ENCODE measurements at regions of chr16 and their contacts with region 1.

Region 1: GRCh38 chr16:22190776-22191531 is 15.1 kb upstream of the EEF2K start:
- DNase-seq: peak; percentile 98
- H3K4me3 ChIP-seq: peak overlapping the region; percentile 63
- H3K27ac ChIP-seq: peak overlapping the region; percentile 85
- H3K4me1 ChIP-seq: peaks cover 15% of the 10 kb centered on the region
- H3K27me3 ChIP-seq: no peaks in the 10 kb centered on the region
- CTCF ChIP-seq: no peak

Region 2: DNA sequence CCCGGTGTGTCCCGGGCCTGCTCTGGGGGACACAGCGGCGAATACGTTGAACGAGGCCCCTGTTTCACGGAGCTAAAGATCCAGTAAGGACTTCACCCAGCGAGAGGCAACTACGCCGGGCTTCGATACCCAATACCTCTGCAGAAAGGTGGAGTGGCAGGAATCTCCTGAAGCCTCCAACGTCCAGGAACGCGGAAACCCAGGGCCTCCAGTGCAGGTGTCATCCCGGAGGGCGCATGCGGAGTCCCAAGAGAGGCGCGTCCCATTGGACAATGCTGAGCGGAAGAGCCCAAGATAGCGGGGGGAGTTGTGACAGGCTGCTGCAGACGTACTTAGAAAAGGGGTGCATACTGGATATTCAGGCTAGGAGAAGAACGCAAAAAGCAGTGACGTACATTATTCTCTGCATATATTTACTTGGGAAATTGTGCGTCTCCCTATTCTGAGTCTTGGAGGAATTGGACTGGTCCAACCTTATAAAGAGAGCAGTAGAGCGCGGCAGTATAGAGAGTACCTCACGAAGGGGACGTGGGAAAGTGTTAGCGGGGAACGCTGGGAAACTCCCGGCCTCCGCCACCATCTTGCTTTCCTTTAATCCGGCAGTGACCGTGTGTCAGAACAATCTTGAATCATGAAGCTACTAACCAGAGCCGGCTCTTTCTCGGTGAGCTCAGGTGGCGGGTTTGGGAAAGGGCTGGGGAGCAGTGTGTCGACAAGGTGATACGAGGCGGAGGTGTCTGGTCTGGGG is 238.0 kb before region 1 on chr16 and contains the start of gene UQCRC2:
- CTCF ChIA-PET with region 1: interaction called, 15 read pairs
- POLR2A ChIA-PET with region 1: no interaction called
- intact Hi-C with region 1: loop called (anchors 2 kb)
- DNase-seq: peak; percentile 95
- H3K4me3 ChIP-seq: peak within 1 kb of the TSS; percentile 74
- H3K27ac ChIP-seq: peak within 1 kb of the TSS; percentile 98
- H3K4me1 ChIP-seq: peaks cover 12% of the 10 kb centered on the region
- H3K27me3 ChIP-seq: no peaks in the 10 kb centered on the region
- CTCF ChIP-seq: no peak
- total RNA-seq, gene UQCRC2: 259 and 311 TPM in 2 replicates

Region 3: DNA sequence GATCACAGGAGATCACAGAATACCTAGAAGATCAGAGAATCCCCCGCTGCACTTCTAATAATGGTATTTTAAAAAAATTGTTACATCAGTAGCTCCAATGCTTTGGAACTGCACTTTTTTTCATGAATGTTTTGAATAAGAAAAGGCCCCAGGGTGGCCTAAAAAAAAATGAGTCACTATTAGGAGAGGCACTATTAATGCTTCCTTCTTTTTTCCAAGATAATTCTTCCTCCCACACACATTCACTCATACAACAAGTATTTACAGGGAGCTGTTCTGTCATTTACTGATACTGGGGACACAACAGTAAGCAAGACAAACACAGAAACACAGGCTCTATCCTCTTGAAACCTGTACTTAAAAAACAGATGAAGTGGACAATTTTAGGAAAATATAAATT is 189.4 kb before region 1 on chr16:
- CTCF ChIA-PET with region 1: interaction called, 21 read pairs
- POLR2A ChIA-PET with region 1: no interaction called
- intact Hi-C with region 1: loop called (anchors 1 kb)
- DNase-seq: peak; percentile 34
- H3K4me3 ChIP-seq: no peak overlapping the region
- H3K27ac ChIP-seq: no peak overlapping the region
- H3K4me1 ChIP-seq: no peaks in the 10 kb centered on the region
- H3K27me3 ChIP-seq: no peaks in the 10 kb centered on the region
- CTCF ChIP-seq: no peak

Region 4: DNA sequence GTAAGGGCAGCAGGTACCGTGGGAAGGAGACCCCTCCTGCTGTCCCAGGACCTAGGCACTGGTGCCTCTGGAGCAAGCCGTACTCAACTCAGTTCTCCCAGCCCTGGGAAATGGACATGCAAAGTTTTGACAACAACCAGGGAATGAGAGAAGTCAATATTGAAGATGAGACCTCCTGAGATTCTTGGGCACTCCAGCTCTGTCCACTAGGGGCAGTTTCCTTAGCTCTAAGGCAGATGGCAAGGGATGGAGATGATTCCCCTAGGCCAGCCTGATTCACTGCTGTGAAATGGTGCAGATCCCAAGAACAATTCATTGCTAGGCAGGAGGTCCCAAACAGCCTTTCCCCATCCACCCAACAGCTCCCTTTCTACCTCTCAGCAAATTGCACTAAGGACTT is 49.2 kb before region 1 on chr16:
- CTCF ChIA-PET with region 1: no interaction called
- POLR2A ChIA-PET with region 1: no interaction called
- intact Hi-C with region 1: no loop called
- DNase-seq: peak; percentile 36
- H3K4me3 ChIP-seq: no peak overlapping the region
- H3K27ac ChIP-seq: no peak overlapping the region
- H3K4me1 ChIP-seq: no peaks in the 10 kb centered on the region
- H3K27me3 ChIP-seq: no peaks in the 10 kb centered on the region
- CTCF ChIP-seq: peak; percentile 56

Region 5: DNA sequence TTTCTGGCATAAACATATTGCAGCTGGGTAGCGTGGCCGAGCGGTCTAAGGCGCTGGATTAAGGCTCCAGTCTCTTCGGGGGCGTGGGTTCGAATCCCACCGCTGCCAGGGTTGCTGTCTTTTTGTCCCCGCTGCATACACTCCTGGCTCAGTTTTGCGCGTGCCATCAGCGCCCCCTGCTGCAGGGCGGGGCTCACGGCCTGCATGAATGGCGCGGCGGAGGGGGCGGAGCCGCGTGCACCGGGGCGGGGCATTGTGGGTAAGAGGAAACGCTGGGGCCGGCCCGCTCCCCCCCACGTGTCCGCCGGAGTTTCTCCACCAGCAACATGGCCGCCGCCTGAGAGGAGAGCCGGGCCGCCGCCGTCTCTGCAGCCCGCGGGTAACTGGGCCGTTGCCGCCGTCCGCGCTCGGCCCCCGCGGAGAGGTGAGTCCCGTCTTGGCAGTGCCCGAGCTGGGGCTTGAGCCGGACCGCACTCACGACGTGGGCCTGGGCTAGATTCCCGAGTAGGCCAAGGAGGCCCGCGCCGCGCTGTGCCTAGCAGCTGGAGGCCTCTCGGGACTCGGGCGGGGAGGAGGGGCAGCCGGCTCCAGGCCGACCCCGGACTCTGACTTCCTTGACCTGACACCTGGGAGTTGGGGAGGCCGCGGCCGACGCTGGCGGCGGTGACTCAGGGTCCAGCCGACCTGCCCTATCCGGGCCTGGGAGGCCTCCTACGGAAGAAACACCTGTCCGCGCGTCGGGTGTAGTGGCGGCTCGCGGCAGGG is 106.3 kb after region 1 on chr16 and contains the start of gene POLR3E:
- CTCF ChIA-PET with region 1: interaction called, 4 read pairs
- POLR2A ChIA-PET with region 1: interaction called, 5 read pairs
- intact Hi-C with region 1: loop called (anchors 1 kb)
- DNase-seq: peak; percentile 99
- H3K4me3 ChIP-seq: peak within 1 kb of the TSS; percentile 88
- H3K27ac ChIP-seq: peak within 1 kb of the TSS; percentile 96
- H3K4me1 ChIP-seq: no peaks in the 10 kb centered on the region
- H3K27me3 ChIP-seq: no peaks in the 10 kb centered on the region
- CTCF ChIP-seq: peak; percentile 95
- total RNA-seq, gene POLR3E: 69.8 and 80.6 TPM in 2 replicates

Region 6: DNA sequence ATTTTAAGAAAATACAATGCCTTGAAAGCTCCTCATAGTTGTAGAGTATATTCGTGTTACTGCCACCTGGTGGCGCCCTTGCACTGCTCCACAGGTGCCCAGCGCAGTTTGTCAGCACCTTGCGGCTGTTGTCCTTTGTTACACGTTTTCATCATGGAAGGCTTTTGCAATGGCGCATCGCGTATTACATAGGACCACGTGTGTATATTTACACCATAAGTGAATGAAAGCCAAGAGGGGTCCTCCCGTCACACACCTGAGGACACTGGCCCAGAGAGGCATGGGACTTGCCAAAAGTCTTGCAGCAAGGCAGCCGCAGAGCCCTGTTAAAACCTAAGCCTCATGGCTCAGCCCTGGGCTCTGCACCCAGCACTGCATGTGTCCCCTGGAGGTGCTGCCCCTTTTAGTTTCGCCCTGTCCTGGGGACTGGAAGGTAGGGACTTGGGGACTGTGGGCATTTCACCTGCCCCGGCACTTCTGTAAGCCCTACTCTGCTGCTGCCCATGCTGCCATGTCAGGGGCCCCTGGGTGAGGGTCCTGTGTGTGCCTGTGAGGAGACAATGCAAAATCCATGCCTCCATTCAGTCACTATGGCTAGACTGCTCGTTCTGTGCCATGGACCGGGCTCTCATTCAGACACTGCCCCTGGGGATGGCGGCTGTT is 130.5 kb after region 1 on chr16:
- CTCF ChIA-PET with region 1: interaction called, 17 read pairs
- POLR2A ChIA-PET with region 1: no interaction called
- intact Hi-C with region 1: no loop called
- DNase-seq: peak; percentile 81
- H3K4me3 ChIP-seq: no peak overlapping the region
- H3K27ac ChIP-seq: no peak overlapping the region
- H3K4me1 ChIP-seq: no peaks in the 10 kb centered on the region
- H3K27me3 ChIP-seq: no peaks in the 10 kb centered on the region
- CTCF ChIP-seq: peak; percentile 98

Measured in A673 (cell line).